Caco-2 (cell line): ENCODE measurements at regions of chr2 and their contacts with region 1.

Region 1: DNA sequence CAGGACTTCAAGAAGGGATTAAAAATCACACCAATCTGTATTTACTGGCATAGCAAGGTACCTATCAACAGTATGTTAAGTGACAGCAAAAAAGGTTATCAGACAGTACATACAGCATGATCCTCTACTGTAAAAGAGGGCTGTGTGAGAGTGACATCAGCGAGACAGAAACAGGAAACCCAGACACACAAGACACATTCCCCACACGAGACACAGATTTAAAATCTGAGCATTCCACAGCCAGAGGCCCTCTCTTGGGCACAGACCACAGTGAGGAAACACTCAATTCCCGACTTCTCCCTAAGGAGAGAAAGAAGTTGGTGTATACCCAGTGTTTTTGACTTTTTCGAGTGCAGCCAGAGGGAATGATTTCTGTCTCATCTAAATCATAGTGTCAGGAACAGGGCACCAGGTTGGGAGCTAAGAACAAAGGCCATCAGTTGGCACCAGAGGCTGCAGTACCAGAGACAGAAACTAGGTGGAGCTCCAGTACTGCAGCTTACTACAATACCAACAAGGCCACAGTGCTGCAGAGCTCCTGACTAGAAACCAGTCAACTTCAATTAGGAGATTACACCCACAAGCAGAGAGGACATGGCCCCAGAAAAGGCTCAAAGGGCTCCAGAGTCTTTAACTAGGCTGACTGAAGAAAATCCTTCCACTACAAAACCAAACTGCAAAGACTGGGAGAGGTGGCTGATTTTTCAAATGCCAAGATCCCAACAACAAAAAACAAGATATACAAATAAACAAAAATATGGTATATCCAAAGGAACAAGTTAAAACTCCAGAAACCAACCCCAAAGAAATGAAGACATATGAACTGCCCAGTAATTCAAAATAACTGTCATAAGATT is 41.0 kb downstream of the UNC50 start:
- DNase-seq: peak; percentile 82 to 84
- H3K4me3 ChIP-seq: no peak overlapping the region
- H3K4me3 Mint-ChIP-seq: no peak overlapping the region
- H3K27ac Mint-ChIP-seq: peak overlapping the region; percentile 4
- H3K4me1 ChIP-seq: no peaks in the 10 kb centered on the region
- H3K4me1 Mint-ChIP-seq: peaks cover 17% of the 10 kb centered on the region
- H3K27me3 ChIP-seq: no peaks in the 10 kb centered on the region
- H3K27me3 Mint-ChIP-seq: no peaks in the 10 kb centered on the region
- CTCF ChIP-seq: peak; percentile 95 to 98

Region 2: GRCh38 chr2:98795891-98796676 is 146.7 kb after region 1 on chr2:
- CTCF ChIA-PET with region 1: interaction called, 12 read pairs
- POLR2A ChIA-PET with region 1: no interaction called
- intact Hi-C with region 1: no loop called
- DNase-seq: peak; percentile 90 to 95
- H3K4me3 ChIP-seq: 0 out of 2 replicates have a peak overlapping the region, but pooled peaks have one; percentile 2
- H3K4me3 Mint-ChIP-seq: peak overlapping the region; percentile 56
- H3K27ac Mint-ChIP-seq: peak overlapping the region; percentile 94
- H3K4me1 ChIP-seq: peaks cover 68% of the 10 kb centered on the region
- H3K4me1 Mint-ChIP-seq: peaks cover 54% of the 10 kb centered on the region
- H3K27me3 ChIP-seq: no peaks in the 10 kb centered on the region
- H3K27me3 Mint-ChIP-seq: no peaks in the 10 kb centered on the region
- CTCF ChIP-seq: no peak

Region 3: DNA sequence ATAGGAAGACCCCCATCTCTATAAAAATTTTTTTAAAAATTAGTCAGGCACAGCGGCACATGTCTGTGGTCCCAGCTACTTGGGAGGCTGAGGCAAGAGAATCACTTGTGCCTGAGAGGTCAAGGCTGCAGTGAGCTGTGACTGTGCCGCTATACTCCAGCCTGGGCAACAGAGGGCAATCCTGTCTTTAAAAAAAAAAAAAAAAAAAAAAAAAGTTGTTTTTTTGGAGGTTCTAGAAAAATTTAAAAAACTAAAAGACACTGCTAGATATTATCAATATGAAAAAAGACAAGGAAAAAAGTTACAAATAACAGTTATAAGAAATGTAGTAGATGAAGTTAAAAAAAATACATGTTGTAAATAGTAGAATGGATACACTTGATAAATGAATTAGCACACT is 436.1 kb after region 1 on chr2:
- CTCF ChIA-PET with region 1: no interaction called
- POLR2A ChIA-PET with region 1: no interaction called
- intact Hi-C with region 1: no loop called
- DNase-seq: peak in 1 of 2 experiments; percentile 14
- H3K4me3 ChIP-seq: no peak overlapping the region
- H3K4me3 Mint-ChIP-seq: no peak overlapping the region
- H3K27ac Mint-ChIP-seq: no peak overlapping the region
- H3K4me1 ChIP-seq: no peaks in the 10 kb centered on the region
- H3K4me1 Mint-ChIP-seq: no peaks in the 10 kb centered on the region
- H3K27me3 ChIP-seq: no peaks in the 10 kb centered on the region
- H3K27me3 Mint-ChIP-seq: peaks cover 6% of the 10 kb centered on the region
- CTCF ChIP-seq: peak; percentile 35 to 60